Gastrocnemius medialis (tissue), 4 donors: ENCODE measurements at regions of chr6 and their contacts with region 1.

Region 1: GRCh38 chr6:44002593-44003344 is 124.5 kb downstream of the MRPL14 start:
- DNase-seq: peak; percentile 39 to 78
- ATAC-seq: peak; percentile 22 to 36
- H3K4me3 ChIP-seq: peak overlapping the region; percentile 36 to 49 (median 44)
- H3K27ac ChIP-seq: peak overlapping the region; percentile 83 to 93 (median 88)
- H3K4me1 ChIP-seq: peaks cover 36 to 45% of the 10 kb centered on the region in 2 donors
- H3K27me3 ChIP-seq: no peaks in the 10 kb centered on the region
- CTCF ChIP-seq: peak in 4 of 5 experiments; percentile 8 to 36 (median 29)
- POLR2A ChIP-seq: peak; percentile 63 to 70

Region 2: DNA sequence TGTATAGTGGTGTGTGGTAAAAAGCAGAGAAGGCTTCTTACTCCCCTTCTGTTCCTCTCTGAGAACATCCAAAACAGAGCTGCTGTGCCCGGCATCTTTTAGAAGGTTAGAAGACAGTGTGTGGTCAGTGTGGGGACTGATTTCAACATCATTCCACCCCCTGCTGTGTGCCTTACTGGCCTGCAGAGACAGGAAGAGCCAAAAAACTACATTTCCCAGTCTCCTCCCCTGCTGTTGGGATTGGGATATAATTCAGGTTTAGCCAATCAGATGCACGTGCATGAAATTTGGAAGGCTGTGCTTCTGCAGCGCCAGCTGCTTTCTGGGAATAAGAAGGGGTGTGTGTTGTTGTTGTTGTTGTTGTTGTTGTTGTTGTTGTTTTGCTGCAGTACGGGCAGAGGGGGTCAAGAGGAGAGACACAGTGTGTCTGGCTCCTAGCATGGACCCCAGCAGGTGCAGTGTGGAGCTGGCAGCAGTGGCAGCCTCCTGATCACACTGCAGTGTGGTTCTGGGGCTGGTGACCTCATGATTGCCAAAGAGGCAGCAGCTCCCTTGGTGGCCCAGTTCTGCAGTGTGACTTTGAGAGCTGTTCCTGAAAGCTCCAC is 49.8 kb after region 1 on chr6:
- in situ Hi-C with region 1: no loop called
- intact Hi-C with region 1: loop called (anchors 5 kb)
- DNase-seq: peak; percentile 73 to 86
- ATAC-seq: peak; percentile 87 to 90
- H3K4me3 ChIP-seq: no peak overlapping the region
- H3K27ac ChIP-seq: peak overlapping the region; percentile 77 to 88 (median 84)
- H3K4me1 ChIP-seq: peaks cover 8 to 28% of the 10 kb centered on the region in 2 donors
- H3K27me3 ChIP-seq: no peaks in the 10 kb centered on the region
- CTCF ChIP-seq: peak in 2 of 5 experiments; percentile 12 to 22
- POLR2A ChIP-seq: peak; percentile 18